Dorsolateral prefrontal cortex (tissue), 120 donors: ENCODE measurements at regions of chr6 and their contacts with region 1.

Region 1: DNA sequence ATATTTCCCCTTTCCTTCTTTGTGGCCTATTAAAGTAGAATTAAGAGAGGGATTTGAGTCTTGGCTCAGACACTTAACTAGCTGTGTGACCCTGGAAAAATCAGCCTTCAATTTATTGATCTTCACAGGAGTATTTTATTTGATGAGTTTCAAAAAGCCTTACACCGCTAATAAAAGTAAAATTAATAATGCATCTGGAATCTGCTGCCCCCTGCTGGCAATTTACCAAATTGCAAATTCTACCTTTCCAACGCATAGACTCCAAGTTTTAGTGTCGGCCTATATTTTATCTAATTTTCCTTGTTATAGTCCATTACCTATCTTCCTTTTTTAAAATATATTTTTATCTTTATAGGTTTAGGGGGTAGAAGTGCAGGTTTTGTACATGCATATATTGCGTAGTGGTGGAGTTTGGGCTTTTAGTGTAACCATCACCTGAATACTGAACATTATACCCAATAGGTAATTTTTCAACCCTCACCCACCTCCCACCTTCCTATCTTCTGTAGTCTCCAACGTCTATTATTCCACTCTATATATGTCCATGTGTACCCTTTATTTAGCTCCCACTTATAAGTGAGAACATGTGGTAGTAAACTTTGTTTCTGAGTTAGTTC is 46.3 kb downstream of the GOPC start:
- DNase-seq: peak in 3 of 10 donors; percentile 36 to 55 (median 51)
- H3K4me3 ChIP-seq: peak overlapping the region in 2 of 59 donors; percentile 4 to 13
- H3K27ac ChIP-seq: no peak overlapping the region
- H3K27me3 ChIP-seq: no peaks in the 10 kb centered on the region
- CTCF ChIP-seq: peak; percentile 82 to 99 (median 92)

Region 2: GRCh38 chr6:117449549-117450439 is 106.2 kb before region 1 on chr6:
- intact Hi-C with region 1: loop called (anchors 5 kb)
- DNase-seq: peak in 5 of 10 donors; percentile 22 to 53 (median 26)
- H3K4me3 ChIP-seq: peak overlapping the region in 4 of 59 donors; percentile 6 to 16 (median 13)
- H3K27ac ChIP-seq: no peak overlapping the region
- H3K27me3 ChIP-seq: no peaks in the 10 kb centered on the region
- CTCF ChIP-seq: peak; percentile 63 to 94 (median 80)

Region 3: DNA sequence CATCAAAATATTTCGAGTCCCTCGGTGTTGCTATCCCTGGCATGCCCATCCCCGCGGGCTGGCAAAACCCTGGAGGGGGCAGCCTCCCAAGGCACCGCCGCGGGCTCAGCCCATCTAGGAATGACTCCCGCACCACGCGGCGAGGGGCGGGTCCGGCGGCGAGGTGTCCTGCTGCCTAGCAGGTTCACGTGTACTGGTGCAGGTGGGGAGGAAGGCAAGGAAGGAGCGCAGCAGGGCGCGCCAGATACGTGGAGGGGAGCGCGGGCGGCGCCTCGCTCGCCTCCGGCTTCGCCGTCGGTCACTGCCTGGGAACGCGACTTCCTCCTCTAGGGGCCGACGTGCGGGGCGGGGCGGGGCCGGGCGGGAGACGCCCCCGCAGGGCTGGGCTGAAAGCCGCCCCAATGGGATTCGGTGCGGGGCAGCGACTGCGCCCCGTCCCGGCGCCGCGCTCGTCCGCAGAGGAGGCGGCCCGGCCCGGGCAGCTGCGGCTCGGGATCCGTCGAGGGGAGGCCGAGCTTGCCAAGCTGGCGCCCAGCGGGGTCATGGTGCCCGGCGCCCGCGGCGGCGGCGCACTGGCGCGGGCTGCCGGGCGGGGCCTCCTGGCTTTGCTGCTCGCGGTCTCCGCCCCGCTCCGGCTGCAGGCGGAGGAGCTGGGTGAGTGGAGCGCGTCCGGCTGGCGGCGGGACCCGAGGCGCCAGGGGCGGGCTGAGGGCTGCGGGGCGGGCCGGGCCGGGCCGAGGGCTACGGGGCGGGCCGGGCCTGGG is 73.6 kb before region 1 on chr6 and contains the start of gene DCBLD1:
- intact Hi-C with region 1: loop called (anchors 5 to 10 kb)
- DNase-seq: peak in 9 of 10 donors; percentile 30 to 76 (median 43)
- H3K4me3 ChIP-seq: peak within 1 kb of the TSS; percentile 49 to 91 (median 76)
- H3K27ac ChIP-seq: peak within 1 kb of the TSS in 53 of 59 donors; percentile 7 to 90 (median 58)
- H3K27me3 ChIP-seq: no peaks in the 10 kb centered on the region
- CTCF ChIP-seq: peak in 13 of 56 donors; percentile 2 to 52 (median 18)
- total RNA-seq, gene DCBLD1: 7.0 to 20.0 (median 12.1) TPM

Region 4: GRCh38 chr6:117947234-117947633 is 391.2 kb after region 1 on chr6:
- intact Hi-C with region 1: no loop called
- DNase-seq: no peak
- H3K4me3 ChIP-seq: no peak overlapping the region
- H3K27ac ChIP-seq: no peak overlapping the region
- H3K27me3 ChIP-seq: peaks cover 0 to 10% (median 0%) of the 10 kb centered on the region in 45 donors
- CTCF ChIP-seq: no peak